HEK293T (cell line): ENCODE measurements at regions of chr10 and their contacts with region 1.

Region 1: DNA sequence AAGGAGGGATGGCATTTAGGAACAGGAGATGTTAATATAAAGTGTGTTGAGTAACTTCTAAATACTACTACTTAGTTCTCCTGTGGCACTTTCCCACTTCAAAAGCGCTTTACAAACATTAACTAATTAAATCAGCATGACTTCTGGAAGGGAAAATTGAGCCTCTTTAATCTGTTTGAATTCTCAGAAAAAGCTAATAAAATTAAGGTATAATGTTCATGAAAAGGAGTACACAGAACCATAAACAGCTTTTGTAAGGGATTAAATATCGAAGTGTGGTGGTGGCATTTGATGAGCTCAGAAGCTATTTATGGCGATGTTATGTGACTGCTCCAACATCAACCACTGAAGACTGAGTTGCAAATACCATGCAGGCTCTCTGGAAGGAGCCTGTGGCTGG is 10.2 kb upstream of the VAX1 start:
- DNase-seq: peak; percentile 43

Region 2: DNA sequence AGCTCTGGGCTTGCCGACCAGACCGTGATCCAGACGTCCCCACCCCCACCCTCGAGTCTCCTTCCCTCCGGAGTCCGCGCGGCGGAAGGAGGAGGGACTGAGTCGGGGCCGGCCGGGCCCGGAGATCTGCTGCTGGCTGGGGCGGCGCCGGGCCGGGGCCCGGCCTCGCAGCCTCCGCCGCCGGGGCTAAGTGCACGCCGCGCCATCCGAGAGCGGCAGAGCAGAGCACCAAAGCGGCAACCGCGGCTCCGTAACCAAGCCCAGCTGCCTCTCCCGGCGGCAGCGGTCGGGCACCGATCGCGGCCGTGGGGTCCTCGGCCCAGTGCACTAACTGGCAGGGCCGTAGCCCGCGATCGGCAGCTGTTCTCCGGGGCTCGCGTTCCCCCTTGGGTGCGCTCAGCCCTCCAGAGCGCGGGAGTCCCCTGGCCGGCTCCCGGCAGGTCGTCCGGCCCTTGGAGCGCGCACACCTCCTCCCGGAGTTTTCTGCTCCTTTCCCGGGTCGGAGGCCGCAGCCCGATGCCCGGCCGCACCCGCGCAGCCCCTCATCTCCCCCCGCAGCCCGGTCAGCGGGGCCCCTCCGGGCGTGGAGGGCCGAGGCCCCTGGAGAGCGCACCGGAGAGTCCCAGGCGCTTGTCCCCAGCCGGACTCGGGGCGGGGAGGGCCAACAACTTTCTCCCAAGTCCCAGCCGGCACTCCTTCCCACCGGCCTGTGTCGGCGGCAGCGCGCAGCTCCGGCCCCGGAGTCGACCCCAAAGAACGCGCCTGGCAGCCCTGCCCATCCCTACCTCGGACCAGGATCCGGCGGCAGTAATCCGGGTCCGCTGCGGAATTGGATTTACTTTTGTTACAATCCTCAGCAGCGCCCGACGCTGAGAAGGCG is 11.0 kb before region 1 on chr10:
- CTCF ChIA-PET with region 1: no interaction called
- POLR2A ChIA-PET with region 1: interaction called, 10 read pairs
- DNase-seq: peak; percentile 84

Region 3: DNA sequence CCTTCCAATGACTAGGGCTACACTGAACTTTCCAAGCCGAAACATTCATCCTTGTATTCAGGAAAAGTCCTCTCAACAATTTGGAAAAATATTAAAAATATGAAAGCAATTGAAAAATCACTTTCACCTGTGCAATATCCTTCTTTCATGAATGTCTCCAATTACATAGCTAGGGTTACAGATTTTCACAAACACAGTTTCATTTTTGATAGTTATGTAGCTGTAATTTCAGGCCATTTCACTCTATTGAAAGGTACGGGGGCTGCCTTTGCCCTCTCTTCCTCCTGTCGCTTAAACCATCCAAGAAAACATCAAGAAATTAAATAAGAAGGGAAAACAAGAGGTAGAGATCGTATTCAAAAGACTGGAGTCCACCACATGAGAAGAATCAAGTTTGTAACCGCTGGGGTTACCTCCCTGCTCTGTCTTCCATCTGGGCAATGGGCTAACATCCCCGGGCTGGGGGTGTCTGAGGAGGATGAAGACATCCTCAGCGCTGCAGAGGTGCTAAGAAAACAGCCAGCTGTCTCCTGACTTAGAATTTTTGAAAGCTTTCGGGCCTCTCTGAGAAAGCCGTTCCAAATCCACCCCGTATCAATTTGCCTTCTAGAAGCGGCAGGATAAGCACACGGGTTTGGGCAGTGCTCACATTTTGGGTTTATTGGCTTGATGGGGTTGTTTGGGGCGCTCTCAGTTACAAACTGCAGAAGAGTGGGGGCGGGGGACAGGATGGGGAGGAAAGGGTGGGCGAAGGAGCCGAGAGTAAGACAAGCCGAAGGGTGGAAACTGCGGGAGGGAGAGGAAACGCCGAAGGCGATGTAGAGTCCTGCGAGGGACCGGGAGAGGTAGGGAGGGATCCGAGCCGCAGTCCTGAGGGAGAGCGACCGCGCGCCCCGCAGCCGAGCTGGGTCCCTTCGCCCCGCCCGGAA is 14.1 kb after region 1 on chr10:
- CTCF ChIA-PET with region 1: no interaction called
- POLR2A ChIA-PET with region 1: no interaction called
- DNase-seq: no peak